ENCODE measurements at regions of chr3 and their contacts with region 1.

Region 1: DNA sequence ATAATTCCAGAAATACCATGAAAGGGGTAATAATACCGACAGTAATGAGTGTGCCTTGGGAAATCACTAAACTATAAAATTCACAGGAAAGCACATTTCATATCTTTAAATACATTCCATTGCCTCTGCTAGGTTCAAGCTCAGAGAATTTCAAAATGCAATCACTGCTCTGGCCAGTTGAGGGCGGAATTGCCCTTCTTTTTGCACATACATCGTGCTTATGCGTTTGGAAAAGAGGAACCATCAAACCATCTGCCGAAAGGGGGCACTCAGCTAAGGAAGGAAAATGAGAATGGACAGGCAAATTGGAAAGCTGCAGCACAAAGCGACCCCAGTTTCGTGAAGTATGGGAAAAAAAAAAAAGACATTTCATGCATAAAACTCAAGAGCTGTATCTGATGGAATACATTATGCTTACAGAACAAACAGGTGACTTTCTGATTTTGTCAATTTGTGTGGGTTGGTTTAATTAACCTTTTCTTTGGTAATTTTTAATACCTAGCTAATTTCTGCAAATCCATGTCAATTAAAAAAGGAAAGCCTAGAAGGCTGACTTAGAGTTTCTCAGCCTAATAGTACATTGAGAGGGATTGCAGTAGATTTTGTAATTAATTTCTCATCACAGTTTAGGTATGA is 61.4 kb downstream of the TUSC7 start:
- DNase-seq: peak; percentile 50
- H3K4me3 ChIP-seq: no peak overlapping the region
- H3K27ac ChIP-seq: no peak overlapping the region
- H3K27me3 ChIP-seq: no peaks in the 10 kb centered on the region
- CTCF ChIP-seq: peak; percentile 99

Region 2: GRCh38 chr3:116757315-116757714 is 13.6 kb before region 1 on chr3:
- CTCF ChIA-PET with region 1: interaction called, 51 read pairs
- POLR2A ChIA-PET with region 1: no interaction called
- DNase-seq: no peak
- H3K4me3 ChIP-seq: no peak overlapping the region
- H3K27ac ChIP-seq: no peak overlapping the region
- H3K27me3 ChIP-seq: no peaks in the 10 kb centered on the region
- CTCF ChIP-seq: no peak

Region 3: GRCh38 chr3:116863822-116864589 is 93.1 kb after region 1 on chr3:
- CTCF ChIA-PET with region 1: interaction called, 15 read pairs
- POLR2A ChIA-PET with region 1: no interaction called
- DNase-seq: peak; percentile 10
- H3K4me3 ChIP-seq: peak overlapping the region; percentile 64
- H3K27ac ChIP-seq: no peak overlapping the region
- H3K27me3 ChIP-seq: no peaks in the 10 kb centered on the region
- CTCF ChIP-seq: peak; percentile 65

Region 4: DNA sequence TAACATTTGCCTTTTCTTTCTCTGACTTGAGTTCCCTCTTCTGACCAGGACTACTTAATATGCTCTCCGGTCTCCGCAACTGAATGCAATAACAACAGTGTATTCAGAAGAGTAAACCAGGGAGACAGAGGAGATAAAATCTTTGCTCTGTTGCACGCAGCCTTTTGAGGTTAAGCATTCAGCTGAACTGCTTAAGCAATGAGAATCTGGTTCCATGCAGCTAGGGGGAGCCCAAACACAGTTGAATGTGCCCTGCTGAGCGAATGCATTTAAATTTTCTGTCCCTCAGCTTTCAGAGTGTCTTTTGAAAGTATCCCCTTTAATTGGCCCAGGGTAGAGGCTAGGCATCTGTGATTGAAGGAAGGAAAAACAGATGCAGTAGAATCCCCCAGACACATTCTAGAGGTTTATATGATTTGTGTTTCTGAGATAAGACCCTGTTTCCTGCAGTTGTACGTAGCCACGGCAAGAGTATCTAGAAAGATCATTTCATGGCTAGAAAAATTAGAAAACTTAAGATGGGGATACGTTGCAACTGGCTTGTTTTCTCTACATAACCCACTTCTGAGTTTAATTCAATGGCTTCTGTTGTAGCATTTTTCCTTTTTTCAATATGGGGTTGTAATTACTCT is 248.3 kb after region 1 on chr3:
- CTCF ChIA-PET with region 1: interaction called, 11 read pairs
- POLR2A ChIA-PET with region 1: no interaction called
- DNase-seq: peak; percentile 36
- H3K4me3 ChIP-seq: no peak overlapping the region
- H3K27ac ChIP-seq: no peak overlapping the region
- H3K27me3 ChIP-seq: no peaks in the 10 kb centered on the region
- CTCF ChIP-seq: peak; percentile 92

Region 5: GRCh38 chr3:117719316-117719926 is 948.5 kb after region 1 on chr3:
- CTCF ChIA-PET with region 1: interaction called, 11 read pairs
- POLR2A ChIA-PET with region 1: no interaction called
- DNase-seq: no peak
- H3K4me3 ChIP-seq: no peak overlapping the region
- H3K27ac ChIP-seq: no peak overlapping the region
- H3K27me3 ChIP-seq: no peaks in the 10 kb centered on the region
- CTCF ChIP-seq: peak; percentile 85

Region 6: DNA sequence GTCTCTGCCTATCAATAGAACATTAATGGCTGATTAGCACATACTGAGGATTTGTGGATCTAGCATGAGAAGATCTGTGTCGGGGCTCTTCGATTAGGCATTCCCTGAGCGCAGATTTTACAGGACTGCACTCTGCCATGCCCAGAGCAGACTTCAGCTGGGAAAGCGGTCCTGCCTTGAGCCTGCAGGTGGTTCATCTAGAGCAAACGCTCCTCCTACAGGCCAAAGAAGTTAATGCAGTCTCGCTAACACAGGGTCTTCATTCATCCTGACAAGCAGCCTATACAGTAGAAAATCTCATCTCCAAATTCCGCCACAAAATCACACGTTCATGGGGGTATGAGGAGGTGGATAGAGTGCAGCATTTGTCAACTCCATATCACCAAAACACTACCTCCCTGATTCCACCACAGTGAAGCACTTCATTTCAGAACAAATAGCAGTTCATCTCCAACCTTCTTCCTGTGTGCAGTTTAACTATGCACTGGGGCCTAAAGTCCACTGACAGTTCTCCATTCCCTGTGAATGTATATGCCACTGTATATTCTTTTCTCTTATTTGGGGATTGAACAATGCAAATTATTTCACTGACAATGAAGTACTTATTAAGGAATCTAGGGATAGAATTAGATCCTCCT is 1857.9 kb after region 1 on chr3:
- CTCF ChIA-PET with region 1: interaction called, 86 read pairs
- POLR2A ChIA-PET with region 1: no interaction called
- DNase-seq: peak; percentile 46
- H3K4me3 ChIP-seq: no peak overlapping the region
- H3K27ac ChIP-seq: no peak overlapping the region
- H3K27me3 ChIP-seq: no peaks in the 10 kb centered on the region
- CTCF ChIP-seq: peak; percentile 94